ENCODE measurements at regions of chr10 and their contacts with region 1.

Region 1: GRCh38 chr10:117442944-117443685 is 67.9 kb upstream of the PDZD8 start:
- DNase-seq: peak; percentile 87
- H3K4me3 ChIP-seq: no peak overlapping the region
- H3K27ac ChIP-seq: no peak overlapping the region
- H3K4me1 ChIP-seq: peaks cover 5% of the 10 kb centered on the region
- H3K27me3 ChIP-seq: peaks cover 1 to 2% of the 10 kb centered on the region in 2 experiments
- CTCF ChIP-seq: peak; percentile 83 to 96
- POLR2A ChIP-seq: no peak

Region 2: DNA sequence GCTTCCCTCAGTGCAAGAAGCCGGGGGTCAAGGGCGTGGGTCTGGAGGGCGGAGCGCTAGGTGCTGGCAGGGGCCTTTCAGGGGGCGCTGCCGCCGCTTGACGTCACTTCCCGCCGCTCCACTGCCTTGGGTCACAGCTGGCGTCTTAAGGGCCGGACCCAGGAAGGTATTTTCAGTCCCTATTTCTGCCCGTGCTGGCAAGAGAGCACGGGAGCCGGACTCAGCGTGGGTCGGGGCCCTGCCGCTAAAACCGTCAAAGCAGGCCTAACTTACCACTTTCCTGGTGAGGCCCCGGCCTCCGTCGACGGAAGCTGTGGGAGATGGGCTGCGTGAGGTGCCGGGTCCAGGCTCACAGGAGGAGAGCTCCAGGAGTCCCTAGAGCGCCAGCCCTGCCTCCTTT is 317.1 kb before region 1 on chr10:
- CTCF ChIA-PET with region 1: no interaction called
- POLR2A ChIA-PET with region 1: no interaction called
- dilution Hi-C with region 1: no loop called
- intact Hi-C with region 1: no loop called
- DNase-seq: no peak
- H3K4me3 ChIP-seq: no peak overlapping the region
- H3K27ac ChIP-seq: no peak overlapping the region
- H3K4me1 ChIP-seq: no peaks in the 10 kb centered on the region
- H3K27me3 ChIP-seq: peaks cover 26 to 27% of the 10 kb centered on the region in 2 experiments
- CTCF ChIP-seq: no peak
- POLR2A ChIP-seq: no peak

Region 3: GRCh38 chr10:117375360-117376178 is 67.5 kb before region 1 on chr10 and contains the start of gene PDZD8:
- CTCF ChIA-PET with region 1: interaction called, 10 read pairs
- POLR2A ChIA-PET with region 1: no interaction called
- dilution Hi-C with region 1: no loop called
- intact Hi-C with region 1: loop called (anchors 5 kb)
- DNase-seq: peak; percentile 92
- H3K4me3 ChIP-seq: peak within 1 kb of the TSS; percentile 47 to 88 (median 84)
- H3K27ac ChIP-seq: peak within 1 kb of the TSS; percentile 83
- H3K4me1 ChIP-seq: peaks cover 21% of the 10 kb centered on the region
- H3K27me3 ChIP-seq: peaks cover 22 to 29% of the 10 kb centered on the region in 2 experiments
- CTCF ChIP-seq: no peak
- POLR2A ChIP-seq: peak; percentile 87
- total RNA-seq, gene PDZD8: 21.9 and 22.6 TPM in 2 replicates

Region 4: GRCh38 chr10:117431160-117431559 is 12.0 kb before region 1 on chr10:
- CTCF ChIA-PET with region 1: interaction called, 48 read pairs
- POLR2A ChIA-PET with region 1: no interaction called
- dilution Hi-C with region 1: no loop called
- intact Hi-C with region 1: no loop called
- DNase-seq: no peak
- H3K4me3 ChIP-seq: no peak overlapping the region
- H3K27ac ChIP-seq: no peak overlapping the region
- H3K4me1 ChIP-seq: no peaks in the 10 kb centered on the region
- H3K27me3 ChIP-seq: peaks cover 0 to 3% of the 10 kb centered on the region in 2 experiments
- CTCF ChIP-seq: no peak
- POLR2A ChIP-seq: no peak

Region 5: DNA sequence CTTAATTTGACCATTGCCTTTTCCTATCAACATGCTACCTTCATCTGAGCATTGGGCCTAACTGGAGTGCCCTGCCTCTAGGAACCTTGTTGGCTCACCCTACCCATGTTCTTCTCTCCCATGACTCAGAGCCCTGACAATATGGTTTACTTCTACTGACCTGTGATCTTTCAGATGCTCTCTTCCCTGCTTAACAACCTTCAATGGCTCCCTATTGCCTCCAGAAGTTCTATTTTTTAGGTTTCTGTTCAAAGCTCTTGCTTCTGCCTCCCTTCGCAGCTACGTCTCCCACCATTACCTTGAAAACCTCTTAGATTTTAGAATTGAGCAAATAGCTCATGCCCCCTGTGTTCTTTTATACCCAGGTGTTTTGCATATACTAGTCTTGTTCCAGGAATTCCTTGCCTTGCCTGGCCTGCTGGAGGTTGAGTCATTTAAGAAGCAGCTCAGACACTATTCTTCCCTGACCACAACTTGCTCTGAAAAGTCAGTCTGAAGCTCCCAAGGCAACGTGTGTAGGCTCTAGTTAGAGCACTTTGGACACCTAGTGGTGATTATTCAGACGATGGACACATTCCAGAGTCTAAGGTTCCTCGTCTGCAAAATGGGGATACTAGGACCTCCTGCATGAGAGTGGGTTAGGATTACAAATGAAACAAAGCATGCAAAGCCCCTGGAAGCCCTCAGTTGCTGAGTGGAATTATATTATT is 35.0 kb after region 1 on chr10:
- CTCF ChIA-PET with region 1: interaction called, 279 read pairs
- POLR2A ChIA-PET with region 1: no interaction called
- dilution Hi-C with region 1: no loop called
- intact Hi-C with region 1: loop called (anchors 1 kb)
- DNase-seq: peak; percentile 44
- H3K4me3 ChIP-seq: no peak overlapping the region
- H3K27ac ChIP-seq: no peak overlapping the region
- H3K4me1 ChIP-seq: no peaks in the 10 kb centered on the region
- H3K27me3 ChIP-seq: peaks cover 2 to 6% of the 10 kb centered on the region in 2 experiments
- CTCF ChIP-seq: peak in 1 of 2 donors; percentile 18
- POLR2A ChIP-seq: no peak

Region 6: DNA sequence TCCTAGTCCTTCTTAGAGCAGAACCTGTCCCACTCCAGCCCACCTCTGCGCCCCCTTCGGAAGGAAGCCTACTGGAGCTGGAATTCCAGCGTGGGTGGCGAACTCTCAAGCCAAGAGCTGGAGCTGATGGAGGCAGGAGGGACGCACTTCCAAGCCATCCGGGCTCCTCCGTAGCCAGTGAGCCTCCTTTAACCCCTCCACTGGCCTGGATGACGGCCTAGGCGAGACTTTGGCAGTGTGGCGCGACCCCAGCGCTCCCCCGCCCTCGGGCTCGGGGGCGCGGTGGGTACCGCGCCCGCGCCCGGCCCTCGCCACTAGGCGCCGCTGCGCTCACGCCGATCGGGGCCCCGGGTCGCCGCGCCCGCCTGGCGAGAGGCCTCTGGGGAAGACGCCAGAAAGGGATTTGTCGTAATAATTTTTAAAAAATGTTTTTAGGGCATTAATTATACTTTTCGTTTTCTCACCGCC is 94.4 kb after region 1 on chr10:
- CTCF ChIA-PET with region 1: interaction called, 19 read pairs
- POLR2A ChIA-PET with region 1: no interaction called
- dilution Hi-C with region 1: no loop called
- intact Hi-C with region 1: loop called (anchors 2 kb)
- DNase-seq: no peak
- H3K4me3 ChIP-seq: no peak overlapping the region
- H3K27ac ChIP-seq: no peak overlapping the region
- H3K4me1 ChIP-seq: peaks cover 2% of the 10 kb centered on the region
- H3K27me3 ChIP-seq: peaks cover 85 to 95% of the 10 kb centered on the region in 2 experiments
- CTCF ChIP-seq: peak; percentile 57 to 81
- POLR2A ChIP-seq: no peak

Region 7: GRCh38 chr10:118459726-118460193 is 1016.6 kb after region 1 on chr10:
- CTCF ChIA-PET with region 1: interaction called, 15 read pairs
- POLR2A ChIA-PET with region 1: no interaction called
- dilution Hi-C with region 1: no loop called
- intact Hi-C with region 1: no loop called
- DNase-seq: peak; percentile 68
- H3K4me3 ChIP-seq: no peak overlapping the region
- H3K27ac ChIP-seq: no peak overlapping the region
- H3K4me1 ChIP-seq: no peaks in the 10 kb centered on the region
- H3K27me3 ChIP-seq: no peaks in the 10 kb centered on the region
- CTCF ChIP-seq: peak; percentile 67 to 80
- POLR2A ChIP-seq: no peak

Measured in endothelial cell of umbilical vein (primary cell).